A673 (cell line): ENCODE measurements at regions of chr10 and their contacts with region 1.

Region 1: GRCh38 chr10:37263341-37263740 is 137.9 kb downstream of the ANKRD30A start:
- DNase-seq: peak; percentile 5
- H3K4me3 ChIP-seq: no peak overlapping the region
- H3K27ac ChIP-seq: no peak overlapping the region
- H3K4me1 ChIP-seq: no peaks in the 10 kb centered on the region
- H3K27me3 ChIP-seq: no peaks in the 10 kb centered on the region
- CTCF ChIP-seq: peak; percentile 31; the same call in 1 of the 2 replicates

Region 2: DNA sequence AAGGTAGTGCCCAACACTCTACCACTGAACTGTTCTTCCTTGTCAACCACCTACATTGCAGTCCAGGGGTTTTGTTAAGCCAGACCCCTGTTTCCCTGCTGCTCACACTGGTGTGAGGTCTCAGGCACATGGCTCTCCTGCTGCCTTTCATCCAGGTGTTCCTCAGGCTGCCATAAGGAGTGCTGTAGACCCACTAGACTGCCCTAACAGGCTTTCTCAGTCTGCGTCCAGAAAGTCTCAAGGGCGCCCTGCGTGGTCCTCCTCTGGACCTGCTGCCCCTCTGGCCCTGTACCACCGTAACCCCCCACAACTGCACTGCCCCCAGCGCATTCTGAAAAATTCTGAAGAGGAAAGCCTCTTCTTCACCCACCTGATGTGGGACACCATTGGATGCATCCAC is 363.7 kb before region 1 on chr10:
- CTCF ChIA-PET with region 1: no interaction called
- POLR2A ChIA-PET with region 1: no interaction called
- intact Hi-C with region 1: loop called (anchors 2 kb)
- DNase-seq: no peak
- H3K4me3 ChIP-seq: no peak overlapping the region
- H3K27ac ChIP-seq: no peak overlapping the region
- H3K4me1 ChIP-seq: no peaks in the 10 kb centered on the region
- H3K27me3 ChIP-seq: no peaks in the 10 kb centered on the region
- CTCF ChIP-seq: no peak

Region 3: GRCh38 chr10:36943534-36943933 is 319.8 kb before region 1 on chr10:
- CTCF ChIA-PET with region 1: no interaction called
- POLR2A ChIA-PET with region 1: no interaction called
- intact Hi-C with region 1: no loop called
- DNase-seq: no peak
- H3K4me3 ChIP-seq: no peak overlapping the region
- H3K27ac ChIP-seq: no peak overlapping the region
- H3K4me1 ChIP-seq: no peaks in the 10 kb centered on the region
- H3K27me3 ChIP-seq: no peaks in the 10 kb centered on the region
- CTCF ChIP-seq: no peak

Region 4: GRCh38 chr10:37003126-37003525 is 260.2 kb before region 1 on chr10:
- CTCF ChIA-PET with region 1: no interaction called
- POLR2A ChIA-PET with region 1: no interaction called
- intact Hi-C with region 1: loop called (anchors 10 kb)
- DNase-seq: no peak
- H3K4me3 ChIP-seq: no peak overlapping the region
- H3K27ac ChIP-seq: no peak overlapping the region
- H3K4me1 ChIP-seq: no peaks in the 10 kb centered on the region
- H3K27me3 ChIP-seq: peaks cover 46% of the 10 kb centered on the region
- CTCF ChIP-seq: no peak

Region 5: GRCh38 chr10:37304036-37304435 is 40.7 kb after region 1 on chr10:
- CTCF ChIA-PET with region 1: no interaction called
- POLR2A ChIA-PET with region 1: no interaction called
- intact Hi-C with region 1: no loop called
- DNase-seq: no peak
- H3K4me3 ChIP-seq: no peak overlapping the region
- H3K27ac ChIP-seq: no peak overlapping the region
- H3K4me1 ChIP-seq: no peaks in the 10 kb centered on the region
- H3K27me3 ChIP-seq: no peaks in the 10 kb centered on the region
- CTCF ChIP-seq: no peak